Right cardiac atrium (tissue), 5 donors: ENCODE measurements at regions of chr13 and their contacts with region 1.

Region 1: GRCh38 chr13:30132623-30133553 is 174.5 kb downstream of the KATNAL1 start:
- DNase-seq: peak; percentile 97 to 99 (median 99)
- ATAC-seq: peak; percentile 95
- H3K4me3 ChIP-seq: no peak overlapping the region
- H3K27ac ChIP-seq: no peak overlapping the region
- H3K4me1 ChIP-seq: no peaks in the 10 kb centered on the region
- H3K27me3 ChIP-seq: no peaks in the 10 kb centered on the region

Region 2: DNA sequence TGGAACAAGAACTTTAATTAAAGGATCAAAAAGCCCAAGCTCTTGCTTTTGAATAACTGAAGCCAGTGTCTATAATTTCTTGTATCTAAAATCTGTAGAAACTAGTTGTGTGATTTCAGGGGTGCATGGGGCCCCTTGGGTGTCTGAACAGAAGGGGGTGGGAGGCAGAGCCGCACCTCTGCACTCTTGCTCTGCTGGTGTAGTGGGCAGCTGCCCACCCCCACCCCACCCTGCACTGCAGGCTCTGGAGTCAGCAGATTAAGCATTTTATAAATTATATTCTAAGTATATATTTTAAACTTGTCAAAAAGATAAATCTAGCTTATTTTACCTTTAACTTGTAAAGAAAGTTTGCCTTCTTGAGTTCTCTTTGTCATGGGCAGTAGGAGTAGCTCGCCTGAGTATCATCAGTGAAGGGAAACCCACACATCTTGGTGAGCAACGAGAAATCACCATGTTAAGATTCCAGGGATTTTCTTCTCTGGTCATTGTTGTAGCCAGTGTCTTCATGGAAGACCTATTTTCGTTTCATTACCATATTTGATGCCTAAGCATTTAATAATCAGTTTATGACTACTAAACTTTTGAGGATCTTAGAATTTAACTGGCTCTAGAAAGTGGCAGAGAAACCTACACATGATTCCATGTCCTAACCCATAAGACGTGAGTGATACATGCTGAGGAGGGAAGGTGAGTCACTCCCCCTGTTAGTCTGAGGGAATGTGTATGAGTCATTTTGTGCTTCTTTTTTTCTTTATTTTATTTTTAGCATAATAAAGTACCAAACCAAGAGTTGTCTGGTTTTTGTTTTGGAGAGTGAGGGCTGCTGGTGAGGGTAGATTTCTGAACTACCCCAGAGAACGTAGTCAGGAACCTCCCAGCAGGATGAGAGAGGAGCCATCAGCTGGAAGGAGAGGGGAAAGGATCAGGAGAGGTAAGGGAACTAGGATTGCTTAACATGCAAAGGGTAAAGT is 297.1 kb after region 1 on chr13:
- intact Hi-C with region 1: loop called in 1 of 4 experiments (anchors 10 kb)
- DNase-seq: no peak
- ATAC-seq: no peak
- H3K4me3 ChIP-seq: no peak overlapping the region
- H3K27ac ChIP-seq: no peak overlapping the region
- H3K4me1 ChIP-seq: no peaks in the 10 kb centered on the region
- H3K27me3 ChIP-seq: no peaks in the 10 kb centered on the region

Region 3: GRCh38 chr13:30443957-30444404 is 311.1 kb after region 1 on chr13:
- intact Hi-C with region 1: loop called in 2 of 4 experiments (anchors 10 kb)
- DNase-seq: no peak
- ATAC-seq: no peak
- H3K4me3 ChIP-seq: no peak overlapping the region
- H3K27ac ChIP-seq: no peak overlapping the region
- H3K4me1 ChIP-seq: peaks cover 3% of the 10 kb centered on the region
- H3K27me3 ChIP-seq: no peaks in the 10 kb centered on the region

Region 4: GRCh38 chr13:30453727-30454126 is 320.8 kb after region 1 on chr13:
- intact Hi-C with region 1: loop called in 2 of 4 experiments (anchors 10 kb)
- DNase-seq: no peak
- ATAC-seq: no peak
- H3K4me3 ChIP-seq: no peak overlapping the region
- H3K27ac ChIP-seq: no peak overlapping the region
- H3K4me1 ChIP-seq: no peaks in the 10 kb centered on the region
- H3K27me3 ChIP-seq: no peaks in the 10 kb centered on the region

Region 5: DNA sequence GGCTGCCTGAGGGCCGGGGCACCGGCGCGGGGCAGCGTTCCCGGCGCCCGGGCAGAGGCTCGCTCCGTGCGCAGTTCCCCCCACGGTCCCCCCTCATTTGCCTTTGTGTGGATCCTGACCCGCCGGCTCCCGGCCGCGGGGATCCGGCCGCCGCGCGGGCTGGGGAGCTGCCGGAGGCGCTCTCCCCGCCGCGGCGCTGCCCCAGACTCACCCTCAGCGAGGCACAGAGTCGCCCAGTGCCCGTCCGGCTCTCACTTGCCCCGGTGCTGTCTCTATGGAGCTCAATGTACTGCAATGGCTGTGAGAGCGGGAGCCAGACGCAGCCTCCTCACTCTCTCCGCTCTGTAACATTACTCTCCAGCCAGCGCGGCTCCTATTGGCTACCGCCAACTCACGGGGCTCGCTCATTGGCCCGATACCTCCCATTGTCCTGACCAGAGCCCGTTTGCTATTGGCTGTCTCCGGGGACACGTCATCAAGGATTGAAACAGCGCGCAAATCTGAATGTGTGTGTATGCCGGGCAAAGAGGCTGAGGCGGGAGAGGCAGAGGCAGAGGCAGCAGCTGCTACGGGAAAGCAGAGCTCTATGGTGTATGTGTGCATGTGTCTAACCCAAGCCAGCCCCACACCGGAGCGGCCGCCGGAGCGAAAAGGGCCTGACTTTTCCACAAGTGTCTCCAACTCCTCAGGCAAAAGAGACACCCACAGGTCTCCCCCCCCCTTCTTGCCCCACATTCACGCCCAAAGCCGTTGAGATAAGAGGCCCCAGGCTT is 332.9 kb after region 1 on chr13 and contains the start of gene HMGB1:
- intact Hi-C with region 1: loop called in 1 of 4 experiments (anchors 5 kb)
- DNase-seq: peak; percentile 98 to 99 (median 98)
- ATAC-seq: peak; percentile 98 to 99
- H3K4me3 ChIP-seq: peak within 1 kb of the TSS; percentile 99
- H3K27ac ChIP-seq: peak within 1 kb of the TSS; percentile 99
- H3K4me1 ChIP-seq: no peaks in the 10 kb centered on the region
- H3K27me3 ChIP-seq: no peaks in the 10 kb centered on the region
- total RNA-seq, gene HMGB1: 185 to 198 (median 192) TPM